Activated CD4-positive, alpha-beta T cell treated with anti-CD3 and anti-CD28 coated beads, Interleukin-2, amount 10 ng/mL, durations not matched to agents 24 days and 14 days (primary cell): ENCODE measurements at regions of chr15 and their contacts with region 1.

Region 1: GRCh38 chr15:33194704-33195670 is at the start of gene FMN1:
- DNase-seq: peak; percentile 97
- H3K4me3 Mint-ChIP-seq: peak within 1 kb of the TSS; percentile 80
- H3K27ac Mint-ChIP-seq: peak within 1 kb of the TSS; percentile 60
- H3K4me1 Mint-ChIP-seq: peaks cover 20% of the 10 kb centered on the region
- H3K27me3 Mint-ChIP-seq: peaks cover 46% of the 10 kb centered on the region
- total RNA-seq, gene FMN1: 0.02 TPM in 1 of 2 replicates, not detected in the other

Region 2: GRCh38 chr15:32723171-32723948 is 471.6 kb before region 1 on chr15:
- intact Hi-C with region 1: loop called (anchors 10 kb)
- DNase-seq: no peak
- H3K4me3 Mint-ChIP-seq: no peak overlapping the region
- H3K27ac Mint-ChIP-seq: no peak overlapping the region
- H3K4me1 Mint-ChIP-seq: peaks cover 11% of the 10 kb centered on the region
- H3K27me3 Mint-ChIP-seq: peaks cover 63% of the 10 kb centered on the region

Region 3: DNA sequence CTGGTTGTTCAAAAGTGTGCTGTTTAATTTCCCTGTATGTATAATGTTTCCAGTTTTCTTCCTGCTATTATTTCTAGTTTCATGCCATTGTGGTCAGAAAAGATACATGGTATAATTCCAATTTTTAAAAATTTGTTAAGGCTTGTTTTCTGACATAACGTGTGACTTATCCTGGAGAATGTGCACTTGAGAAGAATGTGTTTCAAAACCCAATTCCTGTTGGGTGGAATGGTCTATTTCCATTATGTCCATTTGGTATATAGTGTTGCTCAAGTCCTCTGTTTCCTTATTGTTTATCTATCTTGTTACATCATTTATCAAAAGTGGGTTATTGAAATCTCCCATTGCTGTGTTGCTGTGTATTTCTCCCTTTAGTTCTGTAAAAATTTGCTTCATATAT is 261.8 kb before region 1 on chr15:
- intact Hi-C with region 1: no loop called
- DNase-seq: no peak
- H3K4me3 Mint-ChIP-seq: no peak overlapping the region
- H3K27ac Mint-ChIP-seq: no peak overlapping the region
- H3K4me1 Mint-ChIP-seq: no peaks in the 10 kb centered on the region
- H3K27me3 Mint-ChIP-seq: peaks cover 15% of the 10 kb centered on the region

Region 4: GRCh38 chr15:33031324-33031821 is 163.6 kb before region 1 on chr15:
- intact Hi-C with region 1: no loop called
- DNase-seq: no peak
- H3K4me3 Mint-ChIP-seq: no peak overlapping the region
- H3K27ac Mint-ChIP-seq: no peak overlapping the region
- H3K4me1 Mint-ChIP-seq: peaks cover 2% of the 10 kb centered on the region
- H3K27me3 Mint-ChIP-seq: peaks cover 5% of the 10 kb centered on the region